ENCODE measurements at regions of chr6 and their contacts with region 1.

Region 1: DNA sequence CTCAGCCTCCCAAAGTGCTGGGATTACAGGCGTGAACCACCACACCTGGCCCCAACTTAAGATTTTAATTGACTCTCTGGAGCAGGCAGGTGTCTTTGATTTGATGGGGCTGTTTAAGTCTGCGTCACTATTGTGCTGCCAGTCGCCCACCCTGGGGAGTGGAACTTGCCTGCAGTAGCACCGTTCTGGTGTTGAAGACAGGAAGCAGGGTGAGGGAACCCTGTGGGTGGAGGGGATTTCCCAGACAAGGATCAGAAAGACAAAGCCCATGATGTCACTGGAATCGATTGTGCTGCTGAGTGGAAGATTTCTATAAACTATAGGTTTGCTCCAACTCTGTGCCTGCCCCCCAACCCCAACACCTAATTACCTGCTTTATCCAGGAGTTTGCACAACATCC is 11.0 kb downstream of the ALDH8A1 start:
- DNase-seq: no peak
- H3K4me3 Mint-ChIP-seq: no peak overlapping the region
- H3K27ac Mint-ChIP-seq: no peak overlapping the region
- H3K4me1 Mint-ChIP-seq: no peaks in the 10 kb centered on the region
- H3K27me3 Mint-ChIP-seq: no peaks in the 10 kb centered on the region
- CTCF ChIP-seq: no peak

Region 2: GRCh38 chr6:134111062-134111677 is 827.7 kb before region 1 on chr6:
- CTCF ChIA-PET with region 1: interaction called, 20 read pairs
- POLR2A ChIA-PET with region 1: no interaction called
- intact Hi-C with region 1: no loop called
- DNase-seq: peak; percentile 67
- H3K4me3 Mint-ChIP-seq: no peak overlapping the region
- H3K27ac Mint-ChIP-seq: no peak overlapping the region
- H3K4me1 Mint-ChIP-seq: peaks cover 19% of the 10 kb centered on the region
- H3K27me3 Mint-ChIP-seq: no peaks in the 10 kb centered on the region
- CTCF ChIP-seq: peak; percentile 76

Region 3: GRCh38 chr6:134145786-134146185 is 793.1 kb before region 1 on chr6:
- CTCF ChIA-PET with region 1: interaction called, 16 read pairs
- POLR2A ChIA-PET with region 1: no interaction called
- intact Hi-C with region 1: no loop called
- DNase-seq: no peak
- H3K4me3 Mint-ChIP-seq: no peak overlapping the region
- H3K27ac Mint-ChIP-seq: no peak overlapping the region
- H3K4me1 Mint-ChIP-seq: no peaks in the 10 kb centered on the region
- H3K27me3 Mint-ChIP-seq: no peaks in the 10 kb centered on the region
- CTCF ChIP-seq: no peak

Region 4: GRCh38 chr6:134161036-134161435 is 777.9 kb before region 1 on chr6:
- CTCF ChIA-PET with region 1: interaction called, 47 read pairs
- POLR2A ChIA-PET with region 1: interaction called, 6 read pairs
- intact Hi-C with region 1: loop called (anchors 1 kb)
- DNase-seq: peak; percentile 46
- H3K4me3 Mint-ChIP-seq: no peak overlapping the region
- H3K27ac Mint-ChIP-seq: no peak overlapping the region
- H3K4me1 Mint-ChIP-seq: peaks cover 6% of the 10 kb centered on the region
- H3K27me3 Mint-ChIP-seq: no peaks in the 10 kb centered on the region
- CTCF ChIP-seq: no peak

Region 5: DNA sequence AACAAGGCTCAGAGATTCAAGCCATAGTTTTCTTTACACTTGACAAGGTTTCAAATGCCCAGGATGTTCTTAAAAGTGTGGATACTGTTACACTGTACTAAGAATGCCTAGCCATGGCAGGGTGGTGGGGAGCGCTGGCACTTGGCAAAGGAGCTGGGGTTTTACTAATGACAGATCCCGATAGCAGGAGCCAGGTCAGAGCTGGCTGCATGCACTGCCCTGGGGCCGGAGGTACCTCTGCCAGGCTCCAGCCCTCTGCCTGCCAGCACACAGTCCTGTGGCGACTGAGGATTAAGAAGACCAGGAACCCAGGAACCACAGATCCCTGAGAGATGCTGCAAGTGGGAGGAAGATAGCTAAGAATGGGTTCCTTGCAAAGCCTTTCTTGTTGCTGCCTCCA is 249.3 kb before region 1 on chr6:
- CTCF ChIA-PET with region 1: no interaction called
- POLR2A ChIA-PET with region 1: no interaction called
- intact Hi-C with region 1: no loop called
- DNase-seq: peak; percentile 18
- H3K4me3 Mint-ChIP-seq: no peak overlapping the region
- H3K27ac Mint-ChIP-seq: no peak overlapping the region
- H3K4me1 Mint-ChIP-seq: peaks cover 11% of the 10 kb centered on the region
- H3K27me3 Mint-ChIP-seq: no peaks in the 10 kb centered on the region
- CTCF ChIP-seq: no peak

Region 6: GRCh38 chr6:134882426-134883038 is 56.4 kb before region 1 on chr6:
- CTCF ChIA-PET with region 1: interaction called, 61 read pairs
- POLR2A ChIA-PET with region 1: interaction called, 4 read pairs
- intact Hi-C with region 1: loop called (anchors 1 kb)
- DNase-seq: peak; percentile 82
- H3K4me3 Mint-ChIP-seq: no peak overlapping the region
- H3K27ac Mint-ChIP-seq: no peak overlapping the region
- H3K4me1 Mint-ChIP-seq: peaks cover 16% of the 10 kb centered on the region
- H3K27me3 Mint-ChIP-seq: no peaks in the 10 kb centered on the region
- CTCF ChIP-seq: peak; percentile 94

Region 7: GRCh38 chr6:134925800-134926199 is 13.1 kb before region 1 on chr6:
- CTCF ChIA-PET with region 1: interaction called, 24 read pairs
- POLR2A ChIA-PET with region 1: interaction called, 4 read pairs
- intact Hi-C with region 1: no loop called
- DNase-seq: peak; percentile 62
- H3K4me3 Mint-ChIP-seq: no peak overlapping the region
- H3K27ac Mint-ChIP-seq: peak overlapping the region; percentile 8
- H3K4me1 Mint-ChIP-seq: peaks cover 6% of the 10 kb centered on the region
- H3K27me3 Mint-ChIP-seq: no peaks in the 10 kb centered on the region
- CTCF ChIP-seq: no peak

Region 8: DNA sequence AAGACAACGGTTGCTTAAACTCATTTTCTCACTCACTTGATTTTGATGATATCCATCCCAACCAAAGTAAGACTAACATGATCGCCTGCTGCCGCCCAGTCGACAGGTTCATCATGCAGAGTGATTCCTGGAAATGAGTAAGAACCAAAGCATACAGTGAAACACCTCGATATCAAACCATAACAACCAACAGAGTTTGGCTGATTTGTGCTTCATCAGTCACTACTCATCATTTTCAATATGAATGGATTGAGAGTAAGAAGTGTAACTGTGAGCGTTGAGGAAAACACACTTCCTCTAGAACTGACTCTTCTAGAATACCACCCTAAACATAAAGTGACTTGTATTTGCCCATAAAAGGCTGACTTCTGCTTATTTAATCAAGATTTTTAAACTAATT is 40.2 kb after region 1 on chr6:
- CTCF ChIA-PET with region 1: no interaction called
- POLR2A ChIA-PET with region 1: no interaction called
- intact Hi-C with region 1: no loop called
- DNase-seq: no peak
- H3K4me3 Mint-ChIP-seq: no peak overlapping the region
- H3K27ac Mint-ChIP-seq: no peak overlapping the region
- H3K4me1 Mint-ChIP-seq: peaks cover 6% of the 10 kb centered on the region
- H3K27me3 Mint-ChIP-seq: no peaks in the 10 kb centered on the region
- CTCF ChIP-seq: no peak

Region 9: GRCh38 chr6:135075018-135075417 is 136.1 kb after region 1 on chr6:
- CTCF ChIA-PET with region 1: no interaction called
- POLR2A ChIA-PET with region 1: no interaction called
- intact Hi-C with region 1: no loop called
- DNase-seq: no peak
- H3K4me3 Mint-ChIP-seq: no peak overlapping the region
- H3K27ac Mint-ChIP-seq: no peak overlapping the region
- H3K4me1 Mint-ChIP-seq: no peaks in the 10 kb centered on the region
- H3K27me3 Mint-ChIP-seq: no peaks in the 10 kb centered on the region
- CTCF ChIP-seq: no peak

Measured in MCF 10A (cell line).